Activated CD4-positive, alpha-beta T cell treated with anti-CD3 and anti-CD28 coated beads for 36 hours (primary cell): ENCODE measurements at regions of chr2 and their contacts with region 1.

Region 1: DNA sequence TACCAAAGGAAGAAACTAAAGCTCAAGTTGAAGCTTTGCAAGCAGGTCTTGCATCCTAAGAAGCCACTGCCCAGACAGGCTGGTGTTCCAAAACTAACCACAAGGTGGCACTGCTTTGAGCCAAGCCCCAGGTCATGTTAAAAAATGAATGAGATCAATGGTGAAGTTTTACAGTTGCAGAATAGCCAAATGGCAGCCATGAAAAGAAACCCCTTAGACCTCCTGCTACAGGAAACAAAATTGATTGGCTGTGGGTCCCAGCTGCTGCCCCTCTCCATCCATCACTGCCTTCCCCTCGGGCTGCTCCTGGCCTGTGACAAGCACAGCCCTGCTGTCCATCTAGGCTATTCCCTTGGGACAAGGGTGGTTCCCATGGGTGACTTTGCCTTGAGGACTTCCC is 20.7 kb upstream of the MREG start:
- DNase-seq: peak; percentile 90
- ATAC-seq: peak; percentile 47
- H3K4me3 Mint-ChIP-seq: no peak overlapping the region
- H3K27ac Mint-ChIP-seq: no peak overlapping the region
- H3K4me1 Mint-ChIP-seq: peaks cover 42% of the 10 kb centered on the region
- H3K27me3 Mint-ChIP-seq: no peaks in the 10 kb centered on the region

Region 2: DNA sequence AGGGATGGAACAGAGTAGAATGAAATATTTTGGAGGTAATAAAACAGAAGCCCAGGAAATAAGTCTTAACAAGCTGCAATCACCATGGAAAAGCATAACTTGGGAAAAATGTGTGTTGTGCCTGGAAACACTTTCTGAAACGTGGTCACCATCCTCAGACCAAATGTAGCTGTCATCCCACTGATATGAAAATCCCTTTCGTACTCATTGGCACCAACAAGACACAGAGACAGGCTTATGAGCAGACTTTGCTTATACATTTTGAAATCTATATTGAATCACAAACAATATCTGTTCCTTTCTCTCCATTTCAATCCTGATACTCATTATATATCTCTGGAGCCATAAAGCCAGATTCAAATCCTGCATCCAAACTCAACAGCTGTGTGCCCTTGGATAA is 49.4 kb before region 1 on chr2:
- CTCF ChIA-PET with region 1: no interaction called
- POLR2A ChIA-PET with region 1: no interaction called
- intact Hi-C with region 1: no loop called
- DNase-seq: no peak
- ATAC-seq: no peak
- H3K4me3 Mint-ChIP-seq: no peak overlapping the region
- H3K27ac Mint-ChIP-seq: no peak overlapping the region
- H3K4me1 Mint-ChIP-seq: peaks cover 16% of the 10 kb centered on the region
- H3K27me3 Mint-ChIP-seq: no peaks in the 10 kb centered on the region

Region 3: DNA sequence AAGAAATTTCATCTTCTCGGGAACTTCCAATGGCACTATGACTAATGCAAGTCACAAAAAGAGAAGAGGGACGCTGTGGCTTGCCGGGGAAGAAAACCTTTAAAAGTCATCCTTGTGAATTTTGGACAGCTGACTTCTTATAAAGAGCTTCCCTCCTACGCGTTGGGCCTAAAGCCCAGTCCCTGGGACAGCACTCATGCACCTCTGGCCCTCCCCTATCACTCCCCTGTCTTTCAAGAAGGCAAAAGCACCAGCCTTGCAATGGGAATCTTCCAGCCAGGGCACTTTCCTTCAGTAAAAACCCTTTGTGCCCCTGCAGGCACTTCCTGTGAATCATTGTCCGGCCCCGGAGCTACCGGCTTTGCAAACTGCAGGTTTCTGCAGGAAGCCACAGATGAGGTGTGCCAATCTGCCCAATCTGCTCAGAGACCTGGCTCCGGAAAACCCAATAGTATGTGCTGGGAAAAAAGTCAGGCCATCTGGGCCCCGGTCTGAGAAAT is 27.9 kb before region 1 on chr2:
- CTCF ChIA-PET with region 1: interaction called, 12 read pairs
- POLR2A ChIA-PET with region 1: interaction called, 3 read pairs
- intact Hi-C with region 1: no loop called
- DNase-seq: peak; percentile 73
- ATAC-seq: peak; percentile 60
- H3K4me3 Mint-ChIP-seq: peak overlapping the region; percentile 42
- H3K27ac Mint-ChIP-seq: peak overlapping the region; percentile 85
- H3K4me1 Mint-ChIP-seq: peaks cover 50% of the 10 kb centered on the region
- H3K27me3 Mint-ChIP-seq: no peaks in the 10 kb centered on the region

Region 4: GRCh38 chr2:216044883-216045486 is 10.9 kb after region 1 on chr2:
- CTCF ChIA-PET with region 1: interaction called, 28 read pairs
- POLR2A ChIA-PET with region 1: no interaction called
- intact Hi-C with region 1: no loop called
- DNase-seq: no peak
- ATAC-seq: peak; percentile 89
- H3K4me3 Mint-ChIP-seq: no peak overlapping the region
- H3K27ac Mint-ChIP-seq: no peak overlapping the region
- H3K4me1 Mint-ChIP-seq: peaks cover 10% of the 10 kb centered on the region
- H3K27me3 Mint-ChIP-seq: no peaks in the 10 kb centered on the region

Region 5: GRCh38 chr2:216108967-216109921 is 75.2 kb after region 1 on chr2 and contains the start of gene XRCC5:
- CTCF ChIA-PET with region 1: interaction called, 40 read pairs
- POLR2A ChIA-PET with region 1: interaction called, 4 read pairs
- intact Hi-C with region 1: loop called (anchors 1 kb)
- DNase-seq: peak; percentile 99
- ATAC-seq: peak; percentile 75
- H3K4me3 Mint-ChIP-seq: peak within 1 kb of the TSS; percentile 95
- H3K27ac Mint-ChIP-seq: peak within 1 kb of the TSS; percentile 98
- H3K4me1 Mint-ChIP-seq: peaks cover 46% of the 10 kb centered on the region
- H3K27me3 Mint-ChIP-seq: no peaks in the 10 kb centered on the region
- total RNA-seq, gene XRCC5: 395 to 536 TPM

Region 6: GRCh38 chr2:216206041-216206703 is 172.1 kb after region 1 on chr2:
- CTCF ChIA-PET with region 1: interaction called, 4 read pairs
- POLR2A ChIA-PET with region 1: no interaction called
- intact Hi-C with region 1: loop called in 1 of 2 experiments (anchors 5 kb)
- DNase-seq: no peak
- ATAC-seq: peak; percentile 88
- H3K4me3 Mint-ChIP-seq: no peak overlapping the region
- H3K27ac Mint-ChIP-seq: peak overlapping the region; percentile 94
- H3K4me1 Mint-ChIP-seq: peaks cover 72% of the 10 kb centered on the region
- H3K27me3 Mint-ChIP-seq: no peaks in the 10 kb centered on the region

Region 7: GRCh38 chr2:216222650-216223352 is 188.7 kb after region 1 on chr2:
- CTCF ChIA-PET with region 1: no interaction called
- POLR2A ChIA-PET with region 1: no interaction called
- intact Hi-C with region 1: no loop called
- DNase-seq: peak; percentile 49
- ATAC-seq: peak; percentile 70
- H3K4me3 Mint-ChIP-seq: peak overlapping the region; percentile 5
- H3K27ac Mint-ChIP-seq: peak overlapping the region; percentile 83
- H3K4me1 Mint-ChIP-seq: peaks cover 33% of the 10 kb centered on the region
- H3K27me3 Mint-ChIP-seq: no peaks in the 10 kb centered on the region

Region 8: GRCh38 chr2:216596236-216596979 is 562.3 kb after region 1 on chr2:
- CTCF ChIA-PET with region 1: no interaction called
- POLR2A ChIA-PET with region 1: no interaction called
- intact Hi-C with region 1: no loop called
- DNase-seq: no peak
- ATAC-seq: no peak
- H3K4me3 Mint-ChIP-seq: no peak overlapping the region
- H3K27ac Mint-ChIP-seq: no peak overlapping the region
- H3K4me1 Mint-ChIP-seq: no peaks in the 10 kb centered on the region
- H3K27me3 Mint-ChIP-seq: peaks cover 5% of the 10 kb centered on the region

Region 9: DNA sequence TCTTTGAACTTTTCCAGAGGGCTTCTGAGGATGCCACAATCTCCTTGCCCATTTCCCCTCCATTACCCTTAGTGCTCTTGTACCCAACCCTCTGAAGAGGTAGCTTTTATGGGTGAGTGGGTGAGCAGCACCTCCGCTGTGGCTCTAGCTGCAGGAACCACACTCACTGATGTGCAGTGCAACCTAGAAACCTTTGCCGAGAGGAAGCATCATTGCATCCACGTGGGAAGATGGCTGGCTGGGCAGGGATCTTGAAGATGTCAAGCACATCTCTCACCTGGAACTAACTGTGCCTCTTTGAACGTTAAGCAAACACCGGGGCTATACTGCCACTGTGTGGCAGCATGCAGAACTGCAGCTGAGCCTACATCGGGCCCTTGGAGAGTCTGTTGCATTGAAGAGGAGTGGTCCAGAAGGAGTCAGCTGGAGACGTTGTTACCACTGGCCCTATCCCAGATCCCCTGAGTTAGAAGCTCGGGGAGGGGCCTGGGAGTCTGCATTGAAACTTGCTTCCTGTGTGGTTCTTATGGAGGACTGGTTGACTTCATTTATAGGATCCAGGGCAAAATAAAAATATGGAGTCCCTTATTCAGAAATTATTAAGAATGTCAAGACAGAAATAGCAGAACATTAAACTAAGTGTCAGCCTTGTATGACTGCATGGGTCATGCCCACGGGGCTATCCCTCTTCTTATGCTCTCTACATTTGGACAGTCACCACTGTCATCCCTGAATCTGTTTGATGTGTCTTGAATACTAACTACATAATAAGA is 632.6 kb after region 1 on chr2:
- CTCF ChIA-PET with region 1: no interaction called
- POLR2A ChIA-PET with region 1: no interaction called
- intact Hi-C with region 1: loop called in 1 of 2 experiments (anchors 2 kb)
- DNase-seq: peak; percentile 80
- ATAC-seq: peak; percentile 85
- H3K4me3 Mint-ChIP-seq: no peak overlapping the region
- H3K27ac Mint-ChIP-seq: no peak overlapping the region
- H3K4me1 Mint-ChIP-seq: no peaks in the 10 kb centered on the region
- H3K27me3 Mint-ChIP-seq: peaks cover 2% of the 10 kb centered on the region